Activated B cell treated with CpG ODN at 0.5 μM for 24 hours (primary cell): ENCODE measurements at regions of chr14 and their contacts with region 1.

Region 1: DNA sequence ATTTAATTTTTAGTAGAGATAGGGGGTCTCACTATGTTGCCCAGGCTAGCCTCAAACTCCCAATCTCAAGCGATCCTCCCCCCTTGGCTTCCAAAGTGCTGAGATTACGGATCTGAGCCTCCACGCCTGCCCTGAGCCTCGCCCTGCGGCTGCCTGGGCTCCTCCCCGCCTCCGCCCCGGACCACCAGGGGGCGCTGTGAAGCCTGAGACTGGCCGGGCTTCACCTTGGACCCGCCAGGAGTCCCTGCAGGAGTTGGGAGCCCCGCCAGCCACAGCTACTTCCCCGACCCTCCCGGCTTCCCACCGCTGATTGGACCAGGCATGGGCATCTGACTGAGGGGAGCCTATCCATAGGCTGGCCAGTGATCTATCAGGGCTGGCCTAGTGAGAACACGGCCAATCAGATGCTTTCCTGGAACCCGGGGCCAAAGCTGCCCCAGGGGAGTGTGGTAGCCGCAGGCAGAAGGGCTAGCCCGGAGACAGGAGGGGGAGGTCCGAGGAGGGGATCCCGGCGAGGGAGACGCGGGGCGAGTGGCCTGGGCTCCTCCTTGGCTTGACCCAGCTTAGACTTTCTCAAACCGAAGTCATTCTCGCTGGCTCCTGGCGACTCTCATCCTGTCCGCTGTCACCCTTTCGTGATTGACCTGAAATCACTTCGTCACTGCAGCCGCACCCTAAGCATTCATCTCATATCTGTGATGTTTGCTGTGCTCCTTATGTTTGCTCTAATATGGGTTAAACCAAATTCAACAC is 15.1 kb upstream of the ANKRD9 start:
- DNase-seq: peak; percentile 97
- ATAC-seq: peak; percentile 96
- H3K4me3 Mint-ChIP-seq: peak overlapping the region; percentile 91
- H3K27ac Mint-ChIP-seq: peak overlapping the region; percentile 81
- H3K4me1 Mint-ChIP-seq: peaks cover 28% of the 10 kb centered on the region
- H3K27me3 Mint-ChIP-seq: no peaks in the 10 kb centered on the region
- CTCF ChIP-seq: peak; percentile 61

Region 2: DNA sequence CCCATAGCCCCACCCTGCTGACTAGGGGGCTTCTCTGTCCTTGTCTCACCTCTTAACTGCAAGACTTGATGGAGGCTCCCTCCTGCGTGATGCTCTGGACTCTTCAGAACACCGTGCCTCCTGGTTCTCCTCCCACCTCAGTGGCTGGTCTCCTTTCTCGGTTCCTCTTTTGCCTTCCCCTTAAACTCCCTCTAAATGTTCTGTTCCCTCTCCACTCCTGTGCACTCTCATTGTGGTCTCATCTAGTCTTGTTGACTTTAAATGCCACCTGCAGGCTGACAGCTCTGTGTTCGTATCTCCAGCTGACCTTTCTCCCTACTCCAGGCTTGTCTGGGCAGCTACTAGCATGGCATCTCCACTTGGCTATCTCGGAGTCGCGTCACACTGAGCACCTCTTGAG is 531.9 kb before region 1 on chr14:
- CTCF ChIA-PET with region 1: no interaction called
- POLR2A ChIA-PET with region 1: interaction called, 13 read pairs
- intact Hi-C with region 1: no loop called
- DNase-seq: peak; percentile 25
- ATAC-seq: peak; percentile 95
- H3K4me3 Mint-ChIP-seq: no peak overlapping the region
- H3K27ac Mint-ChIP-seq: peak overlapping the region; percentile 59
- H3K4me1 Mint-ChIP-seq: peaks cover 23% of the 10 kb centered on the region
- H3K27me3 Mint-ChIP-seq: no peaks in the 10 kb centered on the region
- CTCF ChIP-seq: no peak

Region 3: DNA sequence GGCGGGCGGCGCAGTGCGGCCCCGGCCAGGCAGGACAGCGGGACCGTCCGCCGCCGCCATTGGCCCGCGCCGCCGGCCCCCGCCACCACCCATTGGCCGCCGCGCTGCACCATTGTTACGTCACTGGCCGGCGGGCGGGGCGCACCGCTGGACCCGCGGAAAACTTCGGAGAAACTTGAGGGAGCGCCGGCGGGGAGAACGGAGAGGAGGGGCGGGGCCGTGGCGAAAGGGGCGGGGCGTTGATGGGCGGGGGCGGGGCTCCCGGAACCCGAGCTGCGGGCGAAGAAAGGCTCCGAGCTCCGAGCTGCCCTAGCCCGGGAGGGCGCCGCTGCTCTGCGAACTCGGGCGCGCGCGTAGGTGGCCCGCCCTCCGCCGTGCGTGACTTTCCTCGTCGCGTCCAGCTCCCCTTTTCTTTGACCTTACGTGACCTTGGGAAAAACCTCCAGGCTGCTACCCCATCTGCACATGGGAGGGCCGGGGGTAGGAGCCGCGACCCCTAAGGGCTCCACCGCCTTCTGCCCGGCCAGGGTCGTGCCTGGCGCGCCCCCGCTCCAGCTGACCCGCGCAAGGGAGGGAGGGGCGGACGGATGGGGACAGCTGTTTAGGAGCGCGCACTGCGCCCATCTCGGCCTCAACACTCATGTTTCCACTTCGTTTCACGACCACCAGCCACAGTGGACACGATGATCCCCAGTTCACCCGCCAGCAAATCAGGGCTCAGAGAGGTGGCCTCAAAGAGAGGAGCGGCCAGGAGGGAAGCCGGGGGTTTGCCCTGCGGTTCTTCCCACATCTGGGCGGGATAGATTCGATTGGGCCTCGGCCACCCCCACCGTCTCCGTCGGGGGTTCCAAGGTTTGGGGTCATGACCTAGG is 14.7 kb before region 1 on chr14 and contains the start of gene ANKRD9:
- CTCF ChIA-PET with region 1: no interaction called
- POLR2A ChIA-PET with region 1: interaction called, 3 read pairs
- intact Hi-C with region 1: loop called (anchors 1 kb)
- DNase-seq: peak; percentile 81
- ATAC-seq: peak; percentile 82
- H3K4me3 Mint-ChIP-seq: peak within 1 kb of the TSS; percentile 82
- H3K27ac Mint-ChIP-seq: no peak within 1 kb of the TSS
- H3K4me1 Mint-ChIP-seq: peaks cover 11% of the 10 kb centered on the region
- H3K27me3 Mint-ChIP-seq: peaks cover 3% of the 10 kb centered on the region
- CTCF ChIP-seq: no peak
- total RNA-seq, gene ANKRD9: 1.4 and 1.8 TPM in 2 replicates

Region 4: GRCh38 chr14:102666635-102667034 is 142.0 kb after region 1 on chr14:
- CTCF ChIA-PET with region 1: no interaction called
- POLR2A ChIA-PET with region 1: no interaction called
- intact Hi-C with region 1: loop called (anchors 5 kb)
- DNase-seq: no peak
- ATAC-seq: no peak
- H3K4me3 Mint-ChIP-seq: no peak overlapping the region
- H3K27ac Mint-ChIP-seq: no peak overlapping the region
- H3K4me1 Mint-ChIP-seq: peaks cover 52% of the 10 kb centered on the region
- H3K27me3 Mint-ChIP-seq: no peaks in the 10 kb centered on the region
- CTCF ChIP-seq: no peak

Region 5: DNA sequence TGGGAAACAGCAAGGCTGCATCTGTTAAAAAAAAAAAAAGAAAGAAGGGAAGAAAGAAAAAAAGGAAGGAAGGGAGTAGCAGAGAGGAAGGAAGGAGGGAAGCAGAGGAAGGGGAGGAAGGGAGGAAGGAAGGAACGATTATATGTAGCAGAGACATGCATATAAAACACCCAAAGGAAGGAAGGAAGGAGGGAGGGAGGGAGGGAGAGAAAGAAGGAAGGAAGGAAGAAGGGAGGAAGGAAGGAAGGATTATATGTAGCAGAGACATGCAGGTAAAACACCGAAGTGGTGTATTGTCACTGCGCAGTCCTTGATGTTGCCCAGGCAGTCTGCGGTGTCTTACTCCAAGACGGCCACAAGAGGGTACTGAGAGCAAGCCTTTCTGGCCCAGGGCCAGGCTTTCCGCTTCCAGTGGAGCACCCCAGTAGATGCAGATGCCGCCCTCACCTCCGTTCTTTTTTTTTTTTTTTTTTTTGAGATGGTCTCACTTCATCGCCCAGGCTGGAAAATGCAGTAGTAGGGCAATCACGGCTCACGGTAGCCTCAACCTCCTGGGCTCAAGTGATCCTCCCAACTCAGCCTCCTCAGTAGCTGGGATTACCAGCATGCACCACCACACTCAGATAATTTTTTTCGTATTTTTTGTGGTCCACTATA is 553.6 kb after region 1 on chr14:
- CTCF ChIA-PET with region 1: no interaction called
- POLR2A ChIA-PET with region 1: no interaction called
- intact Hi-C with region 1: loop called (anchors 1 kb)
- DNase-seq: peak; percentile 46
- ATAC-seq: peak; percentile 66
- H3K4me3 Mint-ChIP-seq: no peak overlapping the region
- H3K27ac Mint-ChIP-seq: no peak overlapping the region
- H3K4me1 Mint-ChIP-seq: peaks cover 5% of the 10 kb centered on the region
- H3K27me3 Mint-ChIP-seq: no peaks in the 10 kb centered on the region
- CTCF ChIP-seq: no peak